ENCODE measurements at regions of chr11 and their contacts with region 1.

Region 1: DNA sequence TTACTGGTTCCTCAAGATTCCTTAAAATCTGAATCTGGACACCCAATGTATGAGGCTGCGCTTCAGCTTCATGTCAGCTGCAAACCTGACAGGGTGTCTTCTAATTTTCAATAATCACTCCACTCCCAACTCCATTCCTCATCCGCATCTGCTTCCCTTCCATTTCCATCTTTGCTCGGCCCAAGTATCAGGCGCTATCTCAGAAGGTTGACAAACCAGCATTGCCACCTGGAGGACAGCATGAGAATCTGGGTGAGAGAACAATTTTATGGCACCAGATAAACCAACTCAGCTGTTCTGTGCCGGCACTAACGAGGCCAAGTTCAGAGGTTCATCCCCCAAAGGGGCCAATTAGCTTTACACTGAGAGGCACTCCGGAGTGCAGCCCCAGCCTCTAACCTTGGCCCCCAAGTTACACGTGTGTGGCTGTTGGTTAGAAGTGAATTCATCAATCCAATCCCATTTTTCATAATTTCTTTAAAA is 79.1 kb upstream of the LMO2 start:
- DNase-seq: peak; percentile 71
- ATAC-seq: peak; percentile 77
- H3K4me3 ChIP-seq: no peak overlapping the region
- H3K4me3 Mint-ChIP-seq: no peak overlapping the region
- H3K27ac ChIP-seq: no peak overlapping the region
- H3K27ac Mint-ChIP-seq: no peak overlapping the region
- H3K4me1 ChIP-seq: no peaks in the 10 kb centered on the region
- H3K4me1 Mint-ChIP-seq: peaks cover 4% of the 10 kb centered on the region
- H3K27me3 ChIP-seq: no peaks in the 10 kb centered on the region
- H3K27me3 Mint-ChIP-seq: no peaks in the 10 kb centered on the region
- CTCF ChIP-seq: peak; percentile 72

Region 2: GRCh38 chr11:33588084-33588483 is 382.9 kb before region 1 on chr11:
- CTCF ChIA-PET with region 1: no interaction called
- POLR2A ChIA-PET with region 1: no interaction called
- intact Hi-C with region 1: no loop called
- DNase-seq: no peak
- ATAC-seq: no peak
- H3K4me3 ChIP-seq: no peak overlapping the region
- H3K4me3 Mint-ChIP-seq: no peak overlapping the region
- H3K27ac ChIP-seq: no peak overlapping the region
- H3K27ac Mint-ChIP-seq: no peak overlapping the region
- H3K4me1 ChIP-seq: no peaks in the 10 kb centered on the region
- H3K4me1 Mint-ChIP-seq: no peaks in the 10 kb centered on the region
- H3K27me3 ChIP-seq: peaks cover 0 to 4% (median 0%) of the 10 kb centered on the region in 4 experiments
- H3K27me3 Mint-ChIP-seq: peaks cover 21% of the 10 kb centered on the region
- CTCF ChIP-seq: no peak

Region 3: DNA sequence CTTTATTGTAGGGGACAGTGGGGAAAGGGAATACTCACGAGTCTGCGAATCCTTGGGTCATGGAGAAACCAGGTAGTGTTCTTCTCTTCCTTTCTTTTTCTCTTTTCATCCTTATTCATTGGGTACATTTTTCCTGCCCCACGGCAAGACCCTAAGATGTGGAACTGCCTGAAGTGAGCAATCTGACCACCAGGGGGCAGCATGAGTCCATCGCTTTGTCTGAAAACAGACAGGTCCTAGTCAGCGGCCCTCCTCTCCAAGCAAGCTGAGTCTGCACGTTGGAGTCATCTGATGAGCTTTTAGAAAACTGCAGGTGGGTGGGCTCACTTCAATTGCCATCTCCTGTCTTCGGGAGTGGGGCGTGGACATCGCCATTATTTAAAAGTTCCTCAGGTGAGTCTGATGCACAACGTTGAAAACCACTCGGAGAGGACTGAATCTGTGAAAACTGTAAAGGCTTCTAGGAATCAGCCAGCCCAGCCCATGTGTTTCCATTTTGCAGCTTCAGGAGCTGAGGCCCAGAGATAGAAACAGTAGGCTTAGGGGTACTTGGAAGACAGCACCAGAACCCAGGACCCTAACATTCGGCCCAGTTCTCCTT is 162.7 kb before region 1 on chr11:
- CTCF ChIA-PET with region 1: interaction called, 30 read pairs
- POLR2A ChIA-PET with region 1: no interaction called
- intact Hi-C with region 1: no loop called
- DNase-seq: peak; percentile 85
- ATAC-seq: peak; percentile 95
- H3K4me3 ChIP-seq: no peak overlapping the region
- H3K4me3 Mint-ChIP-seq: no peak overlapping the region
- H3K27ac ChIP-seq: no peak overlapping the region
- H3K27ac Mint-ChIP-seq: no peak overlapping the region
- H3K4me1 ChIP-seq: no peaks in the 10 kb centered on the region
- H3K4me1 Mint-ChIP-seq: no peaks in the 10 kb centered on the region
- H3K27me3 ChIP-seq: peaks cover 0 to 6% (median 1%) of the 10 kb centered on the region in 4 experiments
- H3K27me3 Mint-ChIP-seq: peaks cover 21% of the 10 kb centered on the region
- CTCF ChIP-seq: peak; percentile 95

Region 4: GRCh38 chr11:33857933-33858371 is 113.1 kb before region 1 on chr11:
- CTCF ChIA-PET with region 1: interaction called, 273 read pairs
- POLR2A ChIA-PET with region 1: no interaction called
- intact Hi-C with region 1: loop called (anchors 1 kb)
- DNase-seq: peak; percentile 86
- ATAC-seq: peak; percentile 96
- H3K4me3 ChIP-seq: no peak overlapping the region
- H3K4me3 Mint-ChIP-seq: no peak overlapping the region
- H3K27ac ChIP-seq: no peak overlapping the region
- H3K27ac Mint-ChIP-seq: no peak overlapping the region
- H3K4me1 ChIP-seq: no peaks in the 10 kb centered on the region
- H3K4me1 Mint-ChIP-seq: peaks cover 6% of the 10 kb centered on the region
- H3K27me3 ChIP-seq: no peaks in the 10 kb centered on the region
- H3K27me3 Mint-ChIP-seq: no peaks in the 10 kb centered on the region
- CTCF ChIP-seq: peak; percentile 93

Region 5: DNA sequence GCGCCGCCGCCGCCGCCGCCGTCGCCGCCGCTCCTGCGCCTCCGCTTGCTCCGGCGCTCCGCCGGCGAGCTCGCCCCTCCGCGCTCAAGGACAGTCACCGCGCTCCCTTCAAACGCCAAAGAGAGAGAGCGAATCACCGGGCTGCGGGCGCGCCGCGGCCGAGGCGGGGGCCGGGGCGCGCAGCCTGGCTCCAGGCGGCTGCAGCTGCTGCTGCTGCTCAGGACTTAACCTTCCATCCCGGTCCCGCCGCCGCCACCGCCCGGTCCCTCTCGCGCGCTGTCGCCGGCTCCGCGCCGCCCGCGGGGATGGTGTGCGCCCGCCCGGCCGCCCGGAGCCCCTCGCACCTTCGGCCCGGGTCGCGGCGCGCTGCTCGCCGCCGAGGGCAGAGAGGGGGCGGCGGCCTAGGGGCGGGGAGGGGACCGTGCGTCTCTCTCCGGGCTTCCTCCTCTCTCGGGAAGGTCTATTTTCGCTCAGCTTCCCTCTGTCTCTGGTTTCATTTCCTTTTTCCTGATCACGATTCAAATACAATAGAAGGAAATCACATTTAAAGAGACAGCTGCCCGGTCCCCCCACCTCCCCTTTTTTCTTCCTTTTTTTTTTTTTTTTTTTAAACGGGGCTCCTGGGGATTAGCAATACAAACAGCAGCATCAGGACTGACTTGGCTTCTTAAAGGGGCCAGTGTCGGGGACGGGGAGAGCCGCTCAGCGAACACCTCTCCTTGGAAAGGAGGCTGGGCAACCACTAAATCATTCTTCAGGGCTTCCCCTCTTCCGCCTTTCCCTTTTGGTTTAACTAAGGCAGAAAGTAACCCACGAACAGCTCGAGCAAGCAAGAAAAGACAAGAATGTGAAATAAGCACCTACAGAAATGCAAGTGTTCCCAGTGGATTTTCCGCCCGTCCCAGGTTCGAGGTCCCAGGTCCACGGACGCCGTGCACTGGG is 101.3 kb before region 1 on chr11:
- CTCF ChIA-PET with region 1: interaction called, 41 read pairs
- POLR2A ChIA-PET with region 1: interaction called, 5 read pairs
- intact Hi-C with region 1: no loop called
- DNase-seq: peak; percentile 75
- ATAC-seq: peak; percentile 72
- H3K4me3 ChIP-seq: peak overlapping the region; percentile 64 to 86 (median 82)
- H3K4me3 Mint-ChIP-seq: peak overlapping the region; percentile 98
- H3K27ac ChIP-seq: no peak overlapping the region
- H3K27ac Mint-ChIP-seq: peak overlapping the region; percentile 83
- H3K4me1 ChIP-seq: peaks cover 26 to 30% of the 10 kb centered on the region in 2 donors
- H3K4me1 Mint-ChIP-seq: peaks cover 32% of the 10 kb centered on the region
- H3K27me3 ChIP-seq: peaks cover 0 to 7% (median 0%) of the 10 kb centered on the region in 4 experiments
- H3K27me3 Mint-ChIP-seq: peaks cover 3% of the 10 kb centered on the region
- CTCF ChIP-seq: no peak

Region 6: GRCh38 chr11:33893711-33894397 is 77.2 kb before region 1 on chr11:
- CTCF ChIA-PET with region 1: interaction called, 12 read pairs
- POLR2A ChIA-PET with region 1: no interaction called
- intact Hi-C with region 1: no loop called
- DNase-seq: peak; percentile 84
- ATAC-seq: peak; percentile 80
- H3K4me3 ChIP-seq: peak overlapping the region; percentile 43 to 74 (median 60)
- H3K4me3 Mint-ChIP-seq: peak overlapping the region; percentile 92
- H3K27ac ChIP-seq: peak overlapping the region; percentile 80 to 89
- H3K27ac Mint-ChIP-seq: peak overlapping the region; percentile 95
- H3K4me1 ChIP-seq: peaks cover 60 to 66% of the 10 kb centered on the region in 2 donors
- H3K4me1 Mint-ChIP-seq: peaks cover 70% of the 10 kb centered on the region
- H3K27me3 ChIP-seq: no peaks in the 10 kb centered on the region
- H3K27me3 Mint-ChIP-seq: no peaks in the 10 kb centered on the region
- CTCF ChIP-seq: no peak

Region 7: DNA sequence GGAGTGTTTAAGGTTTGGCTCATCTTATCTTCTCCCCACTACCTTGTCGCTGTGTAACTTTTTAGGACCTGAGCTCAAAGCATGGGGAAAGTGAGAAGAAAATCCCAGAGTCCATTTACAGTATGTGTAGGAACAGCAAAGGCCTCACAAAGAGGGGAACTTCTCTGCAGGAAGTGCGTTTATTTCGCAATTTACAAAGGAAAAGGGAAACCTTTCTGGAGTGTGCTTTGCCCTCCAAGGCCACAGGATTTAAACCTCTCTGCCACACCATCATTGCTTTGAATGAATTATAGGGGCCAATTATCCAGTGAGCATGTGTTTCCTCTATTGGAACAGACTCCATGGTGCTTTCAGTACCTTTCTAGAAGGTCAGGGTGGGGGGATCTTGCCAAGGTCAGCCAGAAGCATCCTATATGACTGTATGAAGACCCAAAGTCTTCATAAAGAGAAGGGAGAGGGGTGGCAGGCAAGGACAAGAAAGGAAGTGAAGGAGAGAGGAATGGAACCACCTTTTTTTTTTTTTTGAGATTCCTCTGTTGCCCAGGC is 11.1 kb before region 1 on chr11:
- CTCF ChIA-PET with region 1: interaction called, 16 read pairs
- POLR2A ChIA-PET with region 1: no interaction called
- intact Hi-C with region 1: no loop called
- DNase-seq: no peak
- ATAC-seq: no peak
- H3K4me3 ChIP-seq: no peak overlapping the region
- H3K4me3 Mint-ChIP-seq: no peak overlapping the region
- H3K27ac ChIP-seq: no peak overlapping the region
- H3K27ac Mint-ChIP-seq: no peak overlapping the region
- H3K4me1 ChIP-seq: no peaks in the 10 kb centered on the region
- H3K4me1 Mint-ChIP-seq: no peaks in the 10 kb centered on the region
- H3K27me3 ChIP-seq: peaks cover 0 to 2% (median 0%) of the 10 kb centered on the region in 4 experiments
- H3K27me3 Mint-ChIP-seq: no peaks in the 10 kb centered on the region
- CTCF ChIP-seq: no peak